ENCODE measurements at regions of chr11 and their contacts with region 1.

Region 1: DNA sequence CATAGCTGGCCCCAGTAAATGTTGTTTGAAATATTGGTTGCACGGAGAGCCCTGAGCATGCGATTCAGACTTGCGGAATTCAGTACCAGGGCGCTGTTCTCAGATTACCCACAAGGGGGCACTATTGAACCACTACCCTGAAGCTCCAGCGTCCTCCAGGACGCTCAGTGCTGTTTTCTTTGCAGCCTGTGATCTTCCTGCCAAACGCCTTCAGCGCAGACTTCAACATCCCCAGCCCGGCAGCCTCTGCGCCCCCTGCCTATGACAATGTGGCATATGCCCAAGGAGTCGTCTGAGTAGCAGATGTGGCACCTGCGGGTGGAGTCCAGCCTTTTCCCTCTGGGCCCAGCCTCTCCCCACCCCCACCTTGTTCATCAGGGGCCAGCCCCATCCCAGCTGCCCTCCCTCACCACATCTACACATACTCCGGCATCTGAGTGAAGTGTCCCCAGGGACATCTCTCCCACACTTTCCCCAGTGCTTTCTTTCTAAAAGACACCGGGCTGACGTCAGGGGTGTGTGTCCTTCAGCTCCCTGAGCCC is 9.6 kb upstream of the MS4A10 start:
- DNase-seq: peak; percentile 83 to 88
- ATAC-seq: peak; percentile 71 to 93
- H3K4me3 ChIP-seq: no peak overlapping the region
- H3K27ac ChIP-seq: no peak overlapping the region
- H3K4me1 ChIP-seq: peaks cover 5% of the 10 kb centered on the region; the same call in 1 of the 3 replicates
- CTCF ChIP-seq: peak; percentile 86
- EP300 ChIP-seq: no peak
- POLR2A ChIP-seq: no peak
- RAD21 ChIP-seq: peak; percentile 79 to 82

Region 2: DNA sequence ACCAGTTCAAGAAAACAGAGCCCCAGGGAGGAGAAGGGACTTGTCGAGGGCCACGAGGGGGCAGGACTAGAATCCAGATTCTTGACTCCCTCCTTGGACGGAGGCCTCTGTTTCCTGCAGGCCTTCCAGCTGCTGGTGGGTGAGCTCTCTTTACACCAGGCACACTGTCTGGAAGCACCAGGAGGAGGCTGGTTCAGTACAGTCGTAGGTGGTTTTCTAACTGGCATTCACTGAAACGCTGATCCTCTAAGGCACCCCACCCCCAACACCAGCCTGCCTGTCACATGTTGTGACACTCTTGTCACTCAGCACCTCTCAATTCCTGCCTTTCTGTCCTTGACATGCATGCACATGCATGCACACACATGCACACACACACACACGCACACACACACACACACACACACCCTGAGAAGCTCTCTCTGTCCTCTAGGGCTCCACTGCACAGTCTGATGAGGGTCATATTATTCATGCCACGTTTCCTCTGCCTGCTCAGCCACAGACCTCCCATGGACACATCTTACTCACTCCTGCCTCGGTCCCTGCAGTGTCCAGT is 10.4 kb after region 1 on chr11:
- CTCF ChIA-PET with region 1: interaction called, 27 read pairs
- POLR2A ChIA-PET with region 1: interaction called, 3 read pairs
- DNase-seq: no peak
- ATAC-seq: peak; percentile 43 to 48; a peak in 4 of 6 replicates
- H3K4me3 ChIP-seq: no peak overlapping the region
- H3K27ac ChIP-seq: no peak overlapping the region
- H3K4me1 ChIP-seq: no peaks in the 10 kb centered on the region
- CTCF ChIP-seq: no peak
- EP300 ChIP-seq: no peak
- POLR2A ChIP-seq: no peak
- RAD21 ChIP-seq: no peak

Region 3: GRCh38 chr11:60801194-60801593 is 25.7 kb after region 1 on chr11:
- CTCF ChIA-PET with region 1: interaction called, 11 read pairs
- POLR2A ChIA-PET with region 1: no interaction called
- DNase-seq: no peak
- ATAC-seq: no peak
- H3K4me3 ChIP-seq: no peak overlapping the region
- H3K27ac ChIP-seq: no peak overlapping the region
- H3K4me1 ChIP-seq: no peaks in the 10 kb centered on the region
- CTCF ChIP-seq: no peak
- EP300 ChIP-seq: no peak
- POLR2A ChIP-seq: no peak
- RAD21 ChIP-seq: no peak

Region 4: GRCh38 chr11:60887556-60887955 is 112.1 kb after region 1 on chr11:
- CTCF ChIA-PET with region 1: interaction called, 33 read pairs
- POLR2A ChIA-PET with region 1: interaction called, 3 read pairs
- DNase-seq: peak; percentile 41 to 53
- ATAC-seq: peak; percentile 94 to 96
- H3K4me3 ChIP-seq: no peak overlapping the region
- H3K27ac ChIP-seq: no peak overlapping the region
- H3K4me1 ChIP-seq: no peaks in the 10 kb centered on the region
- CTCF ChIP-seq: peak; percentile 49
- EP300 ChIP-seq: no peak
- POLR2A ChIP-seq: no peak
- RAD21 ChIP-seq: peak; percentile 62 to 73

Region 5: GRCh38 chr11:61129639-61130523 is 354.4 kb after region 1 on chr11:
- CTCF ChIA-PET with region 1: interaction called, 12 read pairs
- POLR2A ChIA-PET with region 1: no interaction called
- DNase-seq: peak; percentile 91 to 99
- ATAC-seq: peak; percentile 82 to 98
- H3K4me3 ChIP-seq: no peak overlapping the region
- H3K27ac ChIP-seq: peak overlapping the region; percentile 13 to 75; a peak in 3 of 6 replicates
- H3K4me1 ChIP-seq: 0 out of 3 replicates have a peak, but pooled peaks cover 4% of the 10 kb centered on the region
- CTCF ChIP-seq: peak; percentile 99
- EP300 ChIP-seq: no peak
- POLR2A ChIP-seq: no peak
- RAD21 ChIP-seq: peak; percentile 90 to 91